Breast epithelium (tissue), 4 donors: ENCODE measurements at regions of chrX and their contacts with region 1.

Region 1: GRCh38 chrX:75911716-75912115 is 126.7 kb upstream of the MAGEE2 start:
- DNase-seq: no peak
- H3K4me3 ChIP-seq: no peak overlapping the region
- H3K27ac ChIP-seq: no peak overlapping the region
- H3K4me1 ChIP-seq: no peaks in the 10 kb centered on the region
- H3K27me3 ChIP-seq: peaks cover 0 to 40% of the 10 kb centered on the region in 2 donors
- CTCF ChIP-seq: no peak
- POLR2A ChIP-seq: no peak

Region 2: DNA sequence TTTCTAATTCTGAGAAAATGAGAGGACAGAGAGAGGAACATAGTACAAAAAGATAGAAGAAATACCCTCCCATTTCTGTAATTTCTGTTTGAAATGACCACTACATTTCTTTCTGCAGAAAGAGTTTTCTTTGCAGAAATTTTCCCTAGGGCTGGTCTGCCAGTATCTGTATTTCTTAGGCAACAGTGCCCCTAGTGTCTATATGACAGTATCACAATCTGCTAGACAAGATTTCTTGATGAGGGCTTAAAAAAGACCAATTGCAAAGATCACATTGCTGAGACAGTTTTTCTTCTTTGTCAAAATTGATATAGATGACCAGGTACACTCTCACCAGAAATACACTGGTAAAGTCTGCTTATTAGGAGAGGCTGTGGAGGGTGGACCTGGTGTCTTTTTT is 307.9 kb before region 1 on chrX:
- intact Hi-C with region 1: loop called (anchors 5 kb)
- DNase-seq: no peak
- H3K4me3 ChIP-seq: no peak overlapping the region
- H3K27ac ChIP-seq: no peak overlapping the region
- H3K4me1 ChIP-seq: no peaks in the 10 kb centered on the region
- H3K27me3 ChIP-seq: peaks cover 0 to 28% of the 10 kb centered on the region in 2 donors
- CTCF ChIP-seq: peak; percentile 41 to 53 (median 52)
- POLR2A ChIP-seq: no peak

Region 3: GRCh38 chrX:75989806-75990590 is 78.3 kb after region 1 on chrX:
- intact Hi-C with region 1: no loop called
- DNase-seq: no peak
- H3K4me3 ChIP-seq: no peak overlapping the region
- H3K27ac ChIP-seq: no peak overlapping the region
- H3K4me1 ChIP-seq: no peaks in the 10 kb centered on the region
- H3K27me3 ChIP-seq: peaks cover 0 to 34% of the 10 kb centered on the region in 2 donors
- CTCF ChIP-seq: no peak
- POLR2A ChIP-seq: no peak